ENCODE measurements at regions of chr11 and their contacts with region 1.

Region 1: DNA sequence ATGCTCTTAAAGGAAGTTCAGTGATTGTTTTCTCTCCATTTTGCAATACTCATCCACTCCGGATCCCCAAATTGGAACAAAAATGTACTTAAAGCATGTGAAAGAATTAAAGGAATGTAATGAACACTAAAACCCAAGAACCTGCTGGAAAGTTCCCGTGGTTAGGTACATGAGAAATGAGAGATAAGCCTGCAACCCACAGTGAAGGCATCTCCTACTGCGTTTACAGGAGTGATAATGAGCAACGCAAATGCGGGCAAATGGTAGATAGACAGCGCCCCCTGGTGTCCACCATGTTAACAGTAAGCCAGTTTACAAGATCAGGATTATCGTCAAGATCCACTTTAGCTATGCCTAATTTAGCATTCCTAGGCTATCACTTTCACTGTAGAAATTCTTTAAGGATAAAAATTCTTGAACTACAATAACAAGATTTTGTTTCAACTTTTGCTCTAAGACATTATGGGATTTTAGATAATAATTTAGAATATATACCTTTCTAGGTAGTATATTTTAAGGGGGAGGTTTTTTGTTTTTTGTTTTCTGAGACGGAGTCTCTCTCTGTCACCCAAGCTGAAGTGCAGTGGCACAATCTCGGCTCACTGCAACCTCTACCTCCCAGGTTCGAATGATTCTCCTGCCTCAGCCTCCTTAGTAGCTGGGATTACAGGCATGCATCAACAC is 29.9 kb downstream of the ALG9 start:
- DNase-seq: peak; percentile 85 to 91
- ATAC-seq: peak; percentile 84 to 90 (median 86)
- H3K4me3 ChIP-seq: no peak overlapping the region
- H3K27ac ChIP-seq: peak overlapping the region; percentile 83
- H3K4me1 ChIP-seq: peaks cover 38% of the 10 kb centered on the region
- H3K27me3 ChIP-seq: no peaks in the 10 kb centered on the region
- CTCF ChIP-seq: peak; percentile 97

Region 2: GRCh38 chr11:111565114-111565720 is 276.3 kb before region 1 on chr11:
- intact Hi-C with region 1: loop called (anchors 5 kb)
- DNase-seq: peak in 1 of 2 donors; percentile 27
- ATAC-seq: peak; percentile 60 to 88 (median 75)
- H3K4me3 ChIP-seq: no peak overlapping the region
- H3K27ac ChIP-seq: no peak overlapping the region
- H3K4me1 ChIP-seq: peaks cover 8% of the 10 kb centered on the region
- H3K27me3 ChIP-seq: no peaks in the 10 kb centered on the region
- CTCF ChIP-seq: peak; percentile 96

Region 3: GRCh38 chr11:111586388-111586831 is 255.1 kb before region 1 on chr11:
- intact Hi-C with region 1: loop called (anchors 5 kb)
- DNase-seq: no peak
- ATAC-seq: peak in 2 of 4 donors; percentile 68 to 71
- H3K4me3 ChIP-seq: no peak overlapping the region
- H3K27ac ChIP-seq: no peak overlapping the region
- H3K4me1 ChIP-seq: no peaks in the 10 kb centered on the region
- H3K27me3 ChIP-seq: no peaks in the 10 kb centered on the region
- CTCF ChIP-seq: peak; percentile 55

Region 4: GRCh38 chr11:111777094-111778046 is 64.1 kb before region 1 on chr11:
- intact Hi-C with region 1: loop called (anchors 5 kb)
- DNase-seq: no peak
- ATAC-seq: peak; percentile 85 to 93 (median 88)
- H3K4me3 ChIP-seq: no peak overlapping the region
- H3K27ac ChIP-seq: no peak overlapping the region
- H3K4me1 ChIP-seq: no peaks in the 10 kb centered on the region
- H3K27me3 ChIP-seq: no peaks in the 10 kb centered on the region
- CTCF ChIP-seq: peak; percentile 80

Measured in psoas muscle (tissue), 8 donors.